H1 (cell line): ENCODE measurements at regions of chr3 and their contacts with region 1.

Region 1: DNA sequence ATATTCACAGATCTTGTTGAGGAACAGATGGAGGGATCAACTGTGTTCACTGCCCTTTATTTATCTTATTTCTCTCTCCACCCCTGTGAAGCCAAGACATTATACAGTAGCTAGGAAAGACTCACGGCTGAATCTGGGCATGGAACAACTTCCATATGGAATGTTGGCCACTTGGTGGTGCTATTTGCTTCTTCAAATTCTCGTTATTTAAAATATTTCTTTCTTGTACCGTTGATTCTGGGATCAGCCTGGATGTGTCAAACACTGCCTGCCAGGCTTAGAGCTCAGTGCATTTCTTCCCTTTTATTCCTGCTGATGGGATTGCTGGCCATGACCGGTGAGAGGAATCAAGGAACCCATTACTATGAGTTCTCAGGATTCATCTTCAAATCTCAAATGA is 17.5 kb upstream of the GASK1A start:
- DNase-seq: peak in 1 of 2 experiments; percentile 47
- H3K4me3 ChIP-seq: no peak overlapping the region
- H3K27ac ChIP-seq: no peak overlapping the region
- H3K4me1 ChIP-seq: no peaks in the 10 kb centered on the region
- H3K27me3 ChIP-seq: no peaks in the 10 kb centered on the region
- CTCF ChIP-seq: peak in 2 of 3 experiments; percentile 70 to 71; a peak in 3 of 4 replicates
- EP300 ChIP-seq: no peak
- POLR2A ChIP-seq: no peak
- RAD21 ChIP-seq: peak; percentile 85 to 88

Region 2: DNA sequence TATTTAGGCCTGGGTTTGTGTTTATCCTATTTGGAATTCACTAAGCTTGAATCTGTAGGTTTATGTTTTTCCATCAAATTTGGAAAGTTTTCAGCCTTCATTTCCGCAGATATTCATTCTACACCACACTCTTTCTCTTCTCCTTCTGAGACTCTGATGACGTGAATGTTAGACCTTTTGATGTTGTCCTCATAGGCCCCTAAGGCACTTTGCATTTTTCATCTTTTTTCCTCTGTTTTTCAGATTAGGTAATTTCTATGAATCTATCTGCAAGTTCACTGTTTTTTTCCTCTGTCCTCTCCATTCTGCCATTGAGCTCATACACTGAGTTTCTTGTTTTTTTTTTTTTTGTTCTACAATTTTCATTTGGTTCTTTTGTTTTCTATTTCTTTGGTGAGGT is 30.7 kb before region 1 on chr3:
- CTCF ChIA-PET with region 1: no interaction called
- POLR2A ChIA-PET with region 1: no interaction called
- DNase-seq: no peak
- H3K4me3 ChIP-seq: no peak overlapping the region
- H3K27ac ChIP-seq: no peak overlapping the region
- H3K4me1 ChIP-seq: no peaks in the 10 kb centered on the region
- H3K27me3 ChIP-seq: no peaks in the 10 kb centered on the region
- CTCF ChIP-seq: no peak
- EP300 ChIP-seq: no peak
- POLR2A ChIP-seq: no peak
- RAD21 ChIP-seq: no peak

Region 3: DNA sequence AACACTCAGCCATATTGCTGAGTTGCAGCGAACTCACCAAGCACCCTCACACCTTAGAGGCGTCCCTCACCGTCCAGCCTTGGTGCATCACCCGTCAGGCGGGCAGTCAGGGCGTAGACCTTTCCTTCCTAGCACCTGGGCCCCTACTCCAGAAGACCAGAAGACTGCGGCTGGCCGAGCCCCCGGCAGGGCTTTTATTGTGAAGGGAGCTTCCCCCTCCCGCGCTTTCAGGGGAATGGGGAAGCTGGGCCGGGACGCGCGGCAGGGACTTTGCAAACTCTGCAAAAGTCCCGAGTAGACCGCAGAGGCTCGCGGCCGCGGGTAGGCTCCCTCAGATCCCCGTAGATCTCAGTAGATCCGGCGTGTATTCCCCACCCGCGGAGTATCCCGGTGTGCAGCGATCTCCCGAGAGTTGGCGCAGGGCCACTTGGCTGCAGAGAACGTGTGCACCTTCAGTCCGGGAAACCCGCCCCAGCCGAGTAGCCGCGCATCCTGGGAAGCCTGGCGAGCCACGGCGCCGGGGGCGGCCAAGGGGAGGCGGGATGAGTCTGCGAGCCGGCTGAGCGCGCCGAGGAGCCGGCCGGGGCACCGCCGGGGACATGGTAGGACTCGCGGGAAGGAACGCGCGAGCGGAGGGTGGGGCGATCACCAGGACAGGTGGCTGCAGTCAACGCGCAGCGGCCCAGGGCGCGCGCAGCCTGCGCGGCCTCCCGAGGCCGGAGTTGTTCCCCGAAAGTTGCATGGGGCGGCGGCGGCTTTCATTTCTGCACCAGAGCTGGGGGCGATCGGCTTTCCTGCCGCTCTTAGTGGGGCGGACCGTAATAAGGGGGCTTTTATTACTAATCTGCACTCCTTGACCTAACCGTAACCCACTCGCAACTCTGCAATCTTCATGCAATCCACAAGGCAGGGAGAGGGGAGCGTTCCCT is 17.7 kb after region 1 on chr3 and contains the start of gene GASK1A:
- CTCF ChIA-PET with region 1: interaction called, 51 read pairs
- POLR2A ChIA-PET with region 1: interaction called, 7 read pairs
- DNase-seq: peak in 1 of 2 experiments; percentile 87
- H3K4me3 ChIP-seq: peak within 1 kb of the TSS; percentile 68 to 81 (median 76)
- H3K27ac ChIP-seq: no peak within 1 kb of the TSS
- H3K4me1 ChIP-seq: peaks cover 5 to 31% (median 14%) of the 10 kb centered on the region in 4 experiments
- H3K27me3 ChIP-seq: peaks cover 0 to 15% (median 12%) of the 10 kb centered on the region in 4 experiments; a peak in 6 of 7 replicates
- CTCF ChIP-seq: peak in 1 of 3 experiments; percentile 7; a peak in 1 of 4 replicates
- EP300 ChIP-seq: no peak
- POLR2A ChIP-seq: no peak
- RAD21 ChIP-seq: peak in 1 of 2 experiments; percentile 0; a peak in 1 of 4 replicates
- total RNA-seq, gene GASK1A: 7.9 and 11.5 TPM in 2 replicates

Region 4: GRCh38 chr3:43010638-43011037 is 49.0 kb after region 1 on chr3:
- CTCF ChIA-PET with region 1: interaction called, 65 read pairs
- POLR2A ChIA-PET with region 1: no interaction called
- DNase-seq: no peak
- H3K4me3 ChIP-seq: no peak overlapping the region
- H3K27ac ChIP-seq: no peak overlapping the region
- H3K4me1 ChIP-seq: no peaks in the 10 kb centered on the region; a peak in 1 of 7 replicates
- H3K27me3 ChIP-seq: no peaks in the 10 kb centered on the region
- CTCF ChIP-seq: no peak
- EP300 ChIP-seq: no peak
- POLR2A ChIP-seq: no peak
- RAD21 ChIP-seq: no peak

Region 5: DNA sequence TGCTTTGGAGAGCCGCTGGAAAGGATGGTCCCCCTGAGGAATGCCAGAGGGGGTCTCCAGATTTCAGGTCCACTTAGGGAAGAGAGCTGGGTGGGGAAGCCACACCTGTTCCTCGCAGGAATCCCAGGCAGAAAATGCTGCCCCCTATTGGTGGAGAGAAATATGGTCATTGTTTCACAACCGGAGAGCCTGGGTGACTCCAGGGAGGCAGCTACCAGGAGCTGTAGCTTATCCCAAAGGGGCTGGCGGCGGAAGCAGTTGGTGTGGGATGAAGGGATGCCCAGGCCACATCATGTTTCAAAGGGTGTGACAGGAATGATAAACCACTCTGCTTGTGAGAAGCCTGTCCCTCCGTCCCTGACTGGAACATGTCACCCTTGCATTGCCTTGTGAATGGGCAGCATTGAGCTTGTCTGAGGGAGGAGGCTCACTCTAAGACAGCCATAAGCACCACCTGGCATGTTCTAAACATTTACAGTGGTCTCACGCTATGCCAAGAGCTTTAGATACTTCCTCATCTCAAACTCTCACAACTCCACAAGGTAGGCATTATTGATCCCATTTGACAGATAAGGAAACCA is 109.8 kb after region 1 on chr3:
- CTCF ChIA-PET with region 1: interaction called, 65 read pairs
- POLR2A ChIA-PET with region 1: no interaction called
- DNase-seq: peak; percentile 27 to 77
- H3K4me3 ChIP-seq: no peak overlapping the region
- H3K27ac ChIP-seq: no peak overlapping the region
- H3K4me1 ChIP-seq: no peaks in the 10 kb centered on the region
- H3K27me3 ChIP-seq: no peaks in the 10 kb centered on the region
- CTCF ChIP-seq: peak; percentile 62 to 78 (median 62); a peak in 3 of 4 replicates
- EP300 ChIP-seq: no peak
- POLR2A ChIP-seq: no peak
- RAD21 ChIP-seq: peak; percentile 67 to 77

Region 6: GRCh38 chr3:43120937-43121336 is 159.3 kb after region 1 on chr3:
- CTCF ChIA-PET with region 1: interaction called, 13 read pairs
- POLR2A ChIA-PET with region 1: no interaction called
- DNase-seq: no peak
- H3K4me3 ChIP-seq: no peak overlapping the region
- H3K27ac ChIP-seq: no peak overlapping the region
- H3K4me1 ChIP-seq: no peaks in the 10 kb centered on the region
- H3K27me3 ChIP-seq: peaks cover 0 to 2% (median 0%) of the 10 kb centered on the region in 4 experiments; a peak in 1 of 7 replicates
- CTCF ChIP-seq: no peak
- EP300 ChIP-seq: no peak
- POLR2A ChIP-seq: no peak
- RAD21 ChIP-seq: no peak

Region 7: GRCh38 chr3:43162230-43163084 is 200.8 kb after region 1 on chr3:
- CTCF ChIA-PET with region 1: interaction called, 111 read pairs
- POLR2A ChIA-PET with region 1: no interaction called
- DNase-seq: no peak
- H3K4me3 ChIP-seq: no peak overlapping the region
- H3K27ac ChIP-seq: no peak overlapping the region
- H3K4me1 ChIP-seq: peaks cover 0 to 7% (median 3%) of the 10 kb centered on the region in 4 experiments; a peak in 3 of 7 replicates
- H3K27me3 ChIP-seq: no peaks in the 10 kb centered on the region
- CTCF ChIP-seq: peak in 1 of 3 experiments; percentile 35; a peak in 1 of 4 replicates
- EP300 ChIP-seq: no peak
- POLR2A ChIP-seq: no peak
- RAD21 ChIP-seq: peak; percentile 59 to 60